Ascending aorta (tissue), 2 donors: ENCODE measurements at regions of chr6 and their contacts with region 1.

Region 1: DNA sequence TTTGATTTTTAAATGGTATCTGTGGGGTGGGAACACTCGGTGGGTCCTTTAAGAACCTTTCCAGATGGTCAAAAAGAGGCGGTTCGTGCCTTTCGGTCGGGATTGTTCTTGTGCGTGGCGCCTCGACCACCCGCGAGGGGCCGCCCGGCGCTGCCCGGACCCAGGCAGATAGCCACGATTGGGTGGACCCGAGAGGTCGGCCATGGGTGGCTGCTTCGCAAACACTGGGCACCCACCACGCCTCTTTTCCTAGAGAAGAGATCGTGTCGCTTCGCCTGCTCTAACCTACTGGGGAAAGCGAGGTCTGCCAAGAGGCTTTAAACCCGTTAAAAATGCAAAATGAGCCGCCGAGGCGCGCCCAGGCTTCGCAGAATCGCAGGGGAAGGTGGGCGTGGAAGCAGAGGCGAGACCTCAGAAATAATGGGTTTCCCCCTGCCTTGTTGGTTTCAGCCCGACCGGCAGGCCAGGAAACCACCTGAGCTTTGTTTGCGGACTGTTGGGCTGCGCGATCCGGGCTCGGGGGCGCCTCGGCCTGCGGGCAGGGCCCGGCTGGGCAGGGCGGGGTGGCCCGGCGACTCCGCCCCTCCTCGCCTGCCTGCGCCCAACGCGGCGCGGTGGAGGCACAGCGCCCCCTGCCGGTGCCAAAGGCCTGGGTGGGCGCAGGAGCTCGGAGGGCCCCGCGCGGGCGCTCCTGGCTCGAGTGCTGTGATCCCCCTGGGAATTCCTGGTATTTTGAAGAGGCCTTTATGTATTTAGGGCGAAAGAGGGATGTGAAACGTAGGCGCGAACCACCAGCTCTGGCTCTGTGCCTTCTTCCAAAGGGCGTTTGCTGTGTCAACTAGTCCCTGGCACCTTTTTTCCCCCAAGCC is 1.6 kb downstream of the MARCKS start:
- DNase-seq: peak; percentile 32 to 86
- H3K4me3 ChIP-seq: peak overlapping the region; percentile 58 to 70
- H3K27ac ChIP-seq: peak overlapping the region; percentile 86 to 89
- H3K4me1 ChIP-seq: peaks cover 0 to 5% of the 10 kb centered on the region in 2 donors
- H3K27me3 ChIP-seq: no peaks in the 10 kb centered on the region
- CTCF ChIP-seq: peak; percentile 75 to 98 (median 84)

Region 2: DNA sequence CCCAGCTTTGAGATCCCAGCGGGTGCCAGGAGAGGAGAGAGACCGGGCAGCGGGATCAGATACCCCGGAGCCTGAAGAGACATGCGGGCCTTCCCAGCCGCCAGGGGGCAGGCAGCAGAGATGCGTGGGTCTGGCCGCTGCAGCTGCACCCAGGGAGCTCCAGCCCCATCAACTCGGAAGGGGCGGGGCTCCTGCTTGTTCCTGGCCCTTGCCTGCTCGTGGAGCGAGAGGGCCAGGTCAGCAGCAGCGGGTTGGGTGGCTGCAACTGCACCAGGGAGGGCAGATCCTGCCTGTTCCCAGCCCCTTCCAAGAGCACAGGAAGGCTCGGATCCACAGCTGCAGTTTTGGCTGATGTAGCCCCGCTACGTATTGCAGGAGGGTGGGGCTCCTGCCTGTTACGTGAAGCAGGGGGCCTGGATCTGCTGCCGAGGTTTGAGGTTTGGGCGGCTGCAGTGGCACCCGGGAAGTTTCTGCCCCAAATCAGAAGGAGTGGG is 978.7 kb before region 1 on chr6:
- intact Hi-C with region 1: loop called (anchors 5 kb)
- DNase-seq: no peak
- H3K4me3 ChIP-seq: no peak overlapping the region
- H3K27ac ChIP-seq: no peak overlapping the region
- H3K4me1 ChIP-seq: peaks cover 0 to 4% of the 10 kb centered on the region in 2 donors
- H3K27me3 ChIP-seq: no peaks in the 10 kb centered on the region
- CTCF ChIP-seq: no peak

Region 3: GRCh38 chr6:113306552-113307145 is 552.1 kb before region 1 on chr6:
- intact Hi-C with region 1: loop called (anchors 1 kb)
- DNase-seq: peak in 1 of 2 donors; percentile 65
- H3K4me3 ChIP-seq: no peak overlapping the region
- H3K27ac ChIP-seq: no peak overlapping the region
- H3K4me1 ChIP-seq: no peaks in the 10 kb centered on the region
- H3K27me3 ChIP-seq: no peaks in the 10 kb centered on the region
- CTCF ChIP-seq: peak; percentile 5 to 46 (median 24)

Region 4: DNA sequence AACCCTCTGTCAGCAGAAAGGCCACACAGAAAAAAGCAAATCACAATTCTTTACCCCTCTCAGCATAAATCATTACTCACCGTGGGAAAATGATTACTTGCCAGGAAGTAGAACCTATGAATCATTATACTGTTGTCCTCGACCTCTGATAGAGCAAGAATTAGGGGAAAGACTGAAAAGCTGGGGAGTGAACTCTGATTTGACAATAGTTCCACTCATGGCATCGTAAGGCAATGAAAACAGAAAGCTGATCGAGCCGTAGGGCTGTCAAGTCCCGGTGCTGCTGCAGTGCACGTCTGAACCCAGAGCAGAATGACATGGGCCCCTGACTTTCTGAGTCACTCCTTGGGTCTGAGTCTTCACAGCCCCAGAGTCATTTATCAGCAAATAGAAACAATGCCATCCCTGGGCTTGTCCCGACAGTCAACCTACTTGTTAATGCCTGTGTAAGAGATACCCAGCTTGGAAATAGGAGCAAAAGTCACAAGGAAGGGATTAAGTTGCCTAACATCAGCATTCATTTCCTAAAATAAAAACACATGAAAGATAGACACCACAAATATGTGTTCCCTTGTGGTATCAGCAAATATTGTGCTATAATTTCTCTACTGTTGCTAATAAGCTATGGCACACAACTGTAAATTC is 226.4 kb before region 1 on chr6:
- intact Hi-C with region 1: loop called (anchors 5 kb)
- DNase-seq: peak; percentile 31 to 68
- H3K4me3 ChIP-seq: peak overlapping the region in 1 of 2 donors; percentile 50
- H3K27ac ChIP-seq: peak overlapping the region; percentile 36 to 64
- H3K4me1 ChIP-seq: peaks cover 0 to 17% of the 10 kb centered on the region in 2 donors
- H3K27me3 ChIP-seq: no peaks in the 10 kb centered on the region
- CTCF ChIP-seq: no peak